Activated CD8-positive, alpha-beta memory T cell treated with anti-CD3 and anti-CD28 coated beads, Interleukin-2, amount 10 ng/mL, durations not matched to agents 7 days and 5 days (primary cell): ENCODE measurements at regions of chr14 and their contacts with region 1.

Region 1: GRCh38 chr14:22872033-22872832 is 693 bp downstream of the LRP10 start:
- DNase-seq: peak; percentile 80
- ATAC-seq: peak; percentile 43
- H3K4me3 Mint-ChIP-seq: peak overlapping the region; percentile 88
- H3K27ac Mint-ChIP-seq: peak overlapping the region; percentile 98
- H3K4me1 Mint-ChIP-seq: peaks cover 32% of the 10 kb centered on the region
- H3K27me3 Mint-ChIP-seq: no peaks in the 10 kb centered on the region

Region 2: DNA sequence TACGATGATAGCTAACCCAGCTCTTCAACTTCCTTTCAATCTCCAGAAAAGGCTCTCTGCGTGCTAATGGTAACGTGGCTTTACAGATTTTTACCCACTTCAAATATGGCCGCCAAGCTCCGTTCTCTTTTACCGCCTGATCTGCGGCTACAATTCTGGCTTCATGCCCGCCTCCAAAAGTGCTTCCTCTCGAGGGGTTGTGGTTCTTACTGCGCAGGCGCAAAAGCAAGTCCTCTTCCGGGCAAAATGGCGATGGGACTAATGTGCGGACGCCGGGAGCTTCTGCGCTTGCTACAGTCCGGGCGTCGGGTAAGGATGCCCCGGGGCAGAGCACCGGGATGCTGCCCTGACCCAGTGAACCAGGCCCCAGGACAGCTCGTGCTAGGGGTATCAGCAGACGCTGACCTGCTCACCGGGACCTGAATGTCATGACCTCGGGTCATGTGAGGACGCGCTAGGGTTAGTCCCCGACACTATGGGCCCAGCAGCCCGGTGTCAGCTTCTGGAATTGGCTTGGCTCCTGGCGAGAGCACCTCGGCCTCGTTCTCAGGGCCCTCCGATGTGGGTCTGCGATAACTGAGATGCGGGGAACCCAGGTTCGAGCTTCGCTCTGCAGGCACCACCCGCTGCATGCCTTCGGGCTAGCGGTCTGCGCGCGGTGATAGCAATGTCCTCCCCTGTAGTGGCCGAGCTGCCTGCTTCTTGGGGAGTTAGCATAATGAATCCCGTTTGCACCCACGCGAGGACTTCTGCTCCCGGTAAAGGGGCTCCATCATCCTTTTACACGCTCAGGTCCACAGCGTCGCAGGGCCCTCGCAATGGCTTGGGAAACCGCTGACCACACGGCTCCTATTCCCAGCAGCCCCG is 105.5 kb before region 1 on chr14 and contains the start of gene OXA1L:
- CTCF ChIA-PET with region 1: interaction called, 14 read pairs
- DNase-seq: peak; percentile 98
- ATAC-seq: peak; percentile 92
- H3K4me3 Mint-ChIP-seq: peak within 1 kb of the TSS; percentile 86
- H3K27ac Mint-ChIP-seq: peak within 1 kb of the TSS; percentile 97
- H3K4me1 Mint-ChIP-seq: peaks cover 35% of the 10 kb centered on the region
- H3K27me3 Mint-ChIP-seq: no peaks in the 10 kb centered on the region
- total RNA-seq, gene OXA1L: 106 to 133 TPM

Region 3: DNA sequence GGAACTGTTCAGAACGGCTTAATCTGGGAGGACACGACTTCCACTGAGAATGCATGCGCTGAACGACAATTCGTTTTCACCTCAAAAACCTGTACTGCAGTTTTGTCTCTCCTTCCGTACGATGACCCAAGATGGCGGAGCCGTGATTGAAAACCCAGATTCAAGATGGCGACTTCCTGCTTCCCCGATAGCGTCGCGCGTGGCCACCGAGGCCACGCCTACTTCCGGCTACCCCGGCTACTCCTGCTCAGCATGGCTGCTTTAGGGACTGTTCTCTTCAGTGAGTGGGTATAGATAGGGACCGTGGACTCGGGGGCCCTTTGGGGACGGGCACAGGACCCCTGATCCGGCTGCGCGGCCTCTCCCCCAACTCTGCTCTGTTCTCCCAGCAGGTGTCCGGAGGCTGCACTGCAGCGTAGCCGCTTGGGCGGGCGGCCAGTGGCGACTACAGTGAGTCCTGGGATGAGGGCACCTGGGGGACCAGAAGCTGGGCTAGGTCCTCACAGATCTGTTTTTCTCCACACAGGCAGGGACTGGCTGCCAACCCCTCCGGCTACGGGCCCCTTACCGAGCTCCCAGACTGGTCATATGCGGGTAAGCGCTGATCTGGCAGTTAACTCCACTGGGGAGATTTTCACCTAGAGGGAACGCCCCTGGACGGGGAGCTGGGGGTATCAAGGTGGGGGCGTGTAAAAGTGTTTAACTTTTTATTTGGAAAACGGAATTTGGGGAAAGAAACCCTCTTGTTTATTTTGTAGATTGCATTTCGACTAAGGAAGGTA is 42.4 kb before region 1 on chr14 and contains the start of gene MRPL52:
- CTCF ChIA-PET with region 1: interaction called, 30 read pairs
- DNase-seq: peak; percentile 95
- ATAC-seq: peak; percentile 96
- H3K4me3 Mint-ChIP-seq: peak within 1 kb of the TSS; percentile 92
- H3K27ac Mint-ChIP-seq: peak within 1 kb of the TSS; percentile 96
- H3K4me1 Mint-ChIP-seq: peaks cover 27% of the 10 kb centered on the region
- H3K27me3 Mint-ChIP-seq: peaks cover 3% of the 10 kb centered on the region
- total RNA-seq, gene MRPL52: 107 to 147 TPM

Region 4: DNA sequence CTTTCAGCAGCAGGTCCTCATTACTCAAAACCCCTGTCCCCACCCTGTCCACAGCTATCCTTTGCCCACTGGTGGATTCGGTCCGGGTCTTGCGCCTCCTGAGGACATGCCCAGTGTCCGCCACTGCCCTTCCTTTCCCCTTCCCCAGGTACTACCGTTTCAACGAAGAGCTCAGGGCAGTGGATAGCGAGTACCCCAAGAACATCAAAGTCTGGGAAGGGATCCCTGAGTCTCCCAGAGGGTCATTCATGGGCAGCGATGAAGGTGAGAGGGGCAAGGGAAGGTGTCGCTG is 27.2 kb before region 1 on chr14:
- CTCF ChIA-PET with region 1: no interaction called
- DNase-seq: no peak
- ATAC-seq: no peak
- H3K4me3 Mint-ChIP-seq: no peak overlapping the region
- H3K27ac Mint-ChIP-seq: no peak overlapping the region
- H3K4me1 Mint-ChIP-seq: peaks cover 2% of the 10 kb centered on the region
- H3K27me3 Mint-ChIP-seq: peaks cover 5% of the 10 kb centered on the region

Region 5: GRCh38 chr14:22886500-22887259 is 14.4 kb after region 1 on chr14:
- CTCF ChIA-PET with region 1: interaction called, 126 read pairs
- DNase-seq: peak; percentile 83
- ATAC-seq: peak; percentile 84
- H3K4me3 Mint-ChIP-seq: peak overlapping the region; percentile 77
- H3K27ac Mint-ChIP-seq: peak overlapping the region; percentile 80
- H3K4me1 Mint-ChIP-seq: peaks cover 36% of the 10 kb centered on the region
- H3K27me3 Mint-ChIP-seq: peaks cover 37% of the 10 kb centered on the region

Region 6: GRCh38 chr14:22900081-22900799 is 28.0 kb after region 1 on chr14:
- CTCF ChIA-PET with region 1: interaction called, 62 read pairs
- DNase-seq: peak; percentile 71
- ATAC-seq: peak; percentile 87
- H3K4me3 Mint-ChIP-seq: no peak overlapping the region
- H3K27ac Mint-ChIP-seq: peak overlapping the region; percentile 61
- H3K4me1 Mint-ChIP-seq: peaks cover 18% of the 10 kb centered on the region
- H3K27me3 Mint-ChIP-seq: no peaks in the 10 kb centered on the region

Region 7: DNA sequence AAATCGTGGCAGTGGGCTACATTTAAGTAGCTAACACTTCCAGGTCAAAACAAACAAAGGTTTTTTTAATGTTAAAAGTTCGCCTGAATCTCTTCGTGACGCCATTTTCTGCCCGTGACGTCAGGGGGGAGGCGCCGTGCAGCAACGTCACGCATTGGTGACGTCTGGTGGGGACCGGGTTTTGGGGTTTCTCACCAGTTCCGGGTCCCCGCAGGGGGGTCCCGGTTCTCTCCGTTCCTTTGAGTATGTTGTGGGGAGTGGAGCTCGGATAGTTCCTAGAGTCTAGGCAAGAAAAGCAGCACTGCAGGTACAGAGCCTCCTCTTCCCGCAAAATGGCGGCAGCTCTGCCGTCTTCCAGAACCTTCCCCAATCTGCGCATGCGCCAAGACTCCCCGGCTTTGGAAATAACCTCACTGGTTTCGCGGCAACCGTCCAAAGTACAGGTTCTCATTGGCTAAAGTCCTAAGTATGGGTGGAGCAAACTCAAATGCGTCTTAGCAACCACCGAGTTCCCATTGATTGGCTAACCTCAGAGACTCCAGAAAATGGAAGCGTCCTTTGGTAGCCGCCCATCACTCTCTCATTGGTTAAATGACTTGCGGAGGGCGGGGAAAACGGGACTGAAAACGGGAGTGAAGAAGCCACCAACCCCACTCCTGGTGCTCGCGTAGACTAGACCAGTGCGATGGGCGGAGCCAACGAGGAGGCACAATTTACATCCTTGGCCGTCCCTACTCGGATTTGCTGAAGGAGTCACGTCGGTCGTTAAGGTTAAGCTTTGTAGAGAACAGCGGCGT is 46.8 kb after region 1 on chr14 and contains the start of gene RBM23:
- CTCF ChIA-PET with region 1: interaction called, 38 read pairs
- DNase-seq: peak; percentile 100
- ATAC-seq: peak; percentile 89
- H3K4me3 Mint-ChIP-seq: peak within 1 kb of the TSS; percentile 88
- H3K27ac Mint-ChIP-seq: peak within 1 kb of the TSS; percentile 99
- H3K4me1 Mint-ChIP-seq: peaks cover 22% of the 10 kb centered on the region
- H3K27me3 Mint-ChIP-seq: no peaks in the 10 kb centered on the region
- total RNA-seq, gene RBM23: 82.9 to 96.7 TPM